ENCODE measurements at regions of chr9 and their contacts with region 1.

Region 1: GRCh38 chr9:23483566-23483965 is 342.5 kb downstream of the ELAVL2 start:
- DNase-seq: no peak
- H3K4me3 ChIP-seq: no peak overlapping the region
- H3K27ac ChIP-seq: no peak overlapping the region
- H3K4me1 ChIP-seq: no peaks in the 10 kb centered on the region
- H3K27me3 ChIP-seq: no peaks in the 10 kb centered on the region
- CTCF ChIP-seq: no peak
- POLR2A ChIP-seq: no peak

Region 2: GRCh38 chr9:22469928-22470544 is 1013.5 kb before region 1 on chr9:
- intact Hi-C with region 1: loop called (anchors 10 kb)
- DNase-seq: peak; percentile 13
- H3K4me3 ChIP-seq: no peak overlapping the region
- H3K27ac ChIP-seq: no peak overlapping the region
- H3K4me1 ChIP-seq: no peaks in the 10 kb centered on the region
- H3K27me3 ChIP-seq: no peaks in the 10 kb centered on the region
- CTCF ChIP-seq: peak in 3 of 4 experiments; percentile 56 to 57 (median 56)
- POLR2A ChIP-seq: no peak